Activated CD4-positive, alpha-beta T cell treated with anti-CD3 and anti-CD28 coated beads, Interleukin-2, amount 10 ng/mL, durations not matched to agents 24 days and 14 days (primary cell): ENCODE measurements at regions of chr11 and their contacts with region 1.

Region 1: GRCh38 chr11:9210922-9211320 is 54.2 kb downstream of the DENND5A start:
- DNase-seq: peak; percentile 63
- H3K4me3 Mint-ChIP-seq: peak overlapping the region; percentile 53
- H3K27ac Mint-ChIP-seq: peak overlapping the region; percentile 76
- H3K4me1 Mint-ChIP-seq: peaks cover 54% of the 10 kb centered on the region
- H3K27me3 Mint-ChIP-seq: no peaks in the 10 kb centered on the region

Region 2: DNA sequence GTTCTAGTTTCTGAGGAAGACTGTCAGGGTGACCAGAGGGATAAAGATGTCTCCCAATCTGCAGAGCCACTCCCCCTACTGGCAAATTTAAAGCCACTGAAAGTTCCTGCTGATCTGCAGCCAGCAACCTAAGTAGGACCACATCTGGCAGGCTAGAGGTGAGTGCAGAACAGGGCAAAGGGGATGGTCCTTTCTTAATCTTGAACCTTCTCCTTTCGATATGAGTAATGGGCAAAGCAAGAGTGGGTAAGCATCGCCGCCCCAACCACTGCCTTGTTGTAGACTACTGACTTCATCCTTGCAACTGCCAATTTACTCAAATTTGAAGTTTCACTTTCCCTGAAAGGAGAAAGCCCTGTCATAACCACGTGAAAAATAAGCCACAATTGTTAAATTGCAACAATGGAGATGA is 150.2 kb before region 1 on chr11:
- intact Hi-C with region 1: loop called (anchors 5 kb)
- DNase-seq: peak; percentile 84
- H3K4me3 Mint-ChIP-seq: no peak overlapping the region
- H3K27ac Mint-ChIP-seq: peak overlapping the region; percentile 30
- H3K4me1 Mint-ChIP-seq: peaks cover 14% of the 10 kb centered on the region
- H3K27me3 Mint-ChIP-seq: peaks cover 17% of the 10 kb centered on the region

Region 3: GRCh38 chr11:9601037-9601875 is 390.3 kb after region 1 on chr11:
- intact Hi-C with region 1: loop called (anchors 1 kb)
- DNase-seq: peak; percentile 92
- H3K4me3 Mint-ChIP-seq: peak overlapping the region; percentile 83
- H3K27ac Mint-ChIP-seq: peak overlapping the region; percentile 88
- H3K4me1 Mint-ChIP-seq: peaks cover 30% of the 10 kb centered on the region
- H3K27me3 Mint-ChIP-seq: peaks cover 7% of the 10 kb centered on the region